ENCODE measurements at regions of chr10 and their contacts with region 1.

Region 1: GRCh38 chr10:58177362-58177947 is 90.2 kb downstream of the IPMK start:
- DNase-seq: no peak
- ATAC-seq: no peak; the same call in 1 of the 2 replicates
- H3K4me3 Mint-ChIP-seq: no peak overlapping the region
- H3K27ac Mint-ChIP-seq: no peak overlapping the region
- H3K4me1 Mint-ChIP-seq: no peaks in the 10 kb centered on the region
- H3K27me3 Mint-ChIP-seq: no peaks in the 10 kb centered on the region; the same call in 1 of the 2 replicates
- CTCF ChIP-seq: 0 out of 2 replicates have a peak, but pooled peaks have one; percentile 14

Region 2: GRCh38 chr10:57925044-57925443 is 252.4 kb before region 1 on chr10:
- CTCF ChIA-PET with region 1: no interaction called
- POLR2A ChIA-PET with region 1: no interaction called
- DNase-seq: no peak
- ATAC-seq: no peak
- H3K4me3 Mint-ChIP-seq: no peak overlapping the region
- H3K27ac Mint-ChIP-seq: no peak overlapping the region
- H3K4me1 Mint-ChIP-seq: no peaks in the 10 kb centered on the region
- H3K27me3 Mint-ChIP-seq: no peaks in the 10 kb centered on the region
- CTCF ChIP-seq: no peak

Region 3: DNA sequence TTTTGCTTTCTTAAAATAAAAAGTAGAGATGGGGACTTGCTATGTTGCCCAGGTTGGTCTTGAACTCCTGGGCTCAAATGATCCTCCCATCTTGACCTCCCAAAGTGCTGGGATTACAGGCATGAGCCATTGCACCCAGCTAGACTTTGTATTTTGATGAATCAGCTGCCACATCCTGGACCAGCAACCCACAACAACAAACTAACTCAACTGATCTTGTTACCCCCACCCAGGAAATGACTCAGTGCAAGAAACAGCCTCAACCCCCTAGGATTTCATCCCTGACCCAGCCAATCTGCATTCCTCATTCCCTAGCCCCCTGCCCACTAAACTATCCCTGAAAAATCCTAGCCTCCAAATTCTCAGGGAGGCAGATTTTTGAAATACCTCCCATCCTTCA is 33.5 kb before region 1 on chr10:
- CTCF ChIA-PET with region 1: no interaction called
- POLR2A ChIA-PET with region 1: no interaction called
- DNase-seq: no peak
- ATAC-seq: no peak
- H3K4me3 Mint-ChIP-seq: no peak overlapping the region
- H3K27ac Mint-ChIP-seq: no peak overlapping the region
- H3K4me1 Mint-ChIP-seq: 0 out of 2 replicates have a peak, but pooled peaks cover 2% of the 10 kb centered on the region
- H3K27me3 Mint-ChIP-seq: no peaks in the 10 kb centered on the region; the same call in 1 of the 2 replicates
- CTCF ChIP-seq: no peak

Region 4: GRCh38 chr10:58291538-58292174 is 114.2 kb after region 1 on chr10:
- CTCF ChIA-PET with region 1: interaction called, 20 read pairs
- POLR2A ChIA-PET with region 1: no interaction called
- DNase-seq: no peak
- ATAC-seq: peak; percentile 41; the same call in 1 of the 2 replicates
- H3K4me3 Mint-ChIP-seq: no peak overlapping the region
- H3K27ac Mint-ChIP-seq: no peak overlapping the region
- H3K4me1 Mint-ChIP-seq: peaks cover 12% of the 10 kb centered on the region
- H3K27me3 Mint-ChIP-seq: no peaks in the 10 kb centered on the region
- CTCF ChIP-seq: no peak